HEK293 (cell line): ENCODE measurements at regions of chr17 and their contacts with region 1.

Region 1: DNA sequence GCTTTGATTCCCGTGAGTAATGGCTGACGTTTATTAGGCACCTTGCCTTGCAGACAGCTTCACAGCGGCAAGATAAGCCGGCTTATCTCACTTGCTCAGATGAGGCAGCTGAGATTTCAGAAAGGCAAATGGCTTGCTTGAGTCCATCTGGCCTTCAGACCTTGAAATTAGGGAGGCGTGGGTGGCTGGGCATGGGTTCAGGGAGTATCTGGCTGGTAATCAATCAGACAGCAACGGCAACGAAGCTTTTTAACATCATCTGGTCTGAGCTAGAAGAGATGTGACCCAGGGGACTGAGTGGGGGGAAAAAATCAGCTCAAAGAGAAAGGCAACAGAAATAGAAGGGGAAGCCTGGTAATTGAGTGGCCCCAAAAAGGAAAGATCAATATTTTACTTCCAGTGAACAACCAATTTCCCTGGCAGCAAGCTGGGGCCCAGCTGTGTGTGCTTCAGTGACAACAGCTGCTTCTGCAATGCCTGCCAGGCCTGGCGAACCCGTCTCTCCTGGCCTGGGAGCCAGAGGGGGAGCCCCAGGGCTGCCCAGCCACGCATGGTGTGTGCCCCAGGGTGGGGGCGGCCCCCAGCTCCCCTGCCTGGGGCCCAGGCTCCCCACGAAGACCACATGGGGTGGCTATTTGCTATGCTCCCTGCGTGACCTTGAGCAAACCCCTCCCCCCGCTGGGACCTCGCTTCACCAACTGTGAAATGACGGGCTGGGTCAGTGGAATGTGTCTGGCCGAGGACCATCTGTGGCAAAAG is 34.0 kb downstream of the RAB11FIP4 start:
- H3K4me3 ChIP-seq: no peak overlapping the region
- H3K27ac ChIP-seq: no peak overlapping the region
- H3K4me1 ChIP-seq: no peaks in the 10 kb centered on the region
- CTCF ChIP-seq: no peak

Region 2: GRCh38 chr17:30906101-30906911 is 519.2 kb before region 1 on chr17 and contains the start of gene TEFM:
- CTCF ChIA-PET with region 1: no interaction called
- POLR2A ChIA-PET with region 1: interaction called, 13 read pairs
- H3K4me3 ChIP-seq: peak within 1 kb of the TSS; percentile 70
- H3K27ac ChIP-seq: peak within 1 kb of the TSS; percentile 94
- H3K4me1 ChIP-seq: no peaks in the 10 kb centered on the region; the same call in 1 of the 2 replicates
- CTCF ChIP-seq: peak; percentile 67